Naive thymus-derived CD4-positive, alpha-beta T cell (primary cell): ENCODE measurements at regions of chr12 and their contacts with region 1.

Region 1: DNA sequence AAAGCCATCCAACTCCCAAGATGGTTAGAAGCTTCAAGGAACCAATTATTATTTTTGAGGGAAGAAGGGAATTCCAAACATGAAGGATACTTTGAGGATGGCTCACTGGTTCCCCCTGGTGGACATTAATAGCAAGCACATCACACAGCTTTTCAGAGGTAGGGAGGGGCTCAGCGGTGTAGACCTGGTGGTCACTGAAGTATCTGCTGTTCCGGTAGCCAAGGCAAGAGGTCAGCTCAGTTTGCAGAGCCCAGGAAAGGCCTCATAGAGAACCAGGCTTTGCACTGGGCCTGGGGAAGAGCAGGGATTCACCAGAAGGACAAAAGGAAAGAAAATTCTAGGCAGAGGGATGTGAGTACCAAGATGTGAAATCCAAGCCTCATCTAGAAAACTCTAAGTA is 118.7 kb downstream of the KSR2 start:
- DNase-seq: no peak
- ATAC-seq: peak; percentile 42
- H3K4me3 ChIP-seq: no peak overlapping the region
- H3K4me3 Mint-ChIP-seq: no peak overlapping the region
- H3K27ac ChIP-seq: no peak overlapping the region
- H3K27ac Mint-ChIP-seq: no peak overlapping the region
- H3K4me1 ChIP-seq: no peaks in the 10 kb centered on the region
- H3K4me1 Mint-ChIP-seq: peaks cover 0 to 4% (median 0%) of the 10 kb centered on the region in 7 donors
- H3K27me3 ChIP-seq: no peaks in the 10 kb centered on the region
- H3K27me3 Mint-ChIP-seq: peaks cover 3 to 40% (median 32%) of the 10 kb centered on the region in 5 donors

Region 2: DNA sequence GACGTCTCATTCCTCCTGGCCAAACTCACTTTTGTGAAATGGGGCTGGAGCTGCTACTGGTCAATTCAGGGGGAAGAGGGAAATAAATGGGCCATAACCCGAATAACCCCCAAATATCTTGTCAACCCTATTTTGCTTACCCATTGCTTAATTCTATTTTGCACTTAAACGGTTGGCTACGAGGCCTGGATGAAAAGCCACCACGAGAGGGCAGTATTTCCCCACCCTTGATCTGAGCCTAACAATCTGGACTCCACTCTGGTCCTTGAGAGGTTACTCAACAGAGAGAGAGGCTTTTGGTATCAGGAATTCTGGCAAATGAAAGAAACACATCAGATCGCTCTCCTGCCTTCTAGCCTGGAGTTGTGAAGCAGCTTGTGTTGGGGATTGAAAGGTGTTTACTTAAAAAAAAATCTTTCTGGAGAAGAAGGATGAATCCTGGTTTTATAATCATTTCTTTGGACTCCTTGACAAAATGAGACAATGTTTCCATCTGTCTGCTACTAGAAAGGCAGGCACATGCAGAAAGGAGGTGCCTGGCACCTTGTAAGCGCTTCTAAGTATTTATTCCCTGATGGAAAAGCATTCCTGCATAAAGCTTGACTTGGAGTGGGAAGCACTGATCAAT is 637.4 kb before region 1 on chr12:
- CTCF ChIA-PET with region 1: no interaction called
- POLR2A ChIA-PET with region 1: no interaction called
- intact Hi-C with region 1: loop called in 1 of 2 experiments (anchors 5 kb)
- DNase-seq: peak; percentile 18 to 58 (median 45)
- ATAC-seq: peak; percentile 72
- H3K4me3 ChIP-seq: no peak overlapping the region
- H3K4me3 Mint-ChIP-seq: no peak overlapping the region
- H3K27ac ChIP-seq: no peak overlapping the region
- H3K27ac Mint-ChIP-seq: no peak overlapping the region
- H3K4me1 ChIP-seq: no peaks in the 10 kb centered on the region
- H3K4me1 Mint-ChIP-seq: peaks cover 0 to 4% (median 0%) of the 10 kb centered on the region in 7 donors
- H3K27me3 ChIP-seq: no peaks in the 10 kb centered on the region
- H3K27me3 Mint-ChIP-seq: peaks cover 10 to 21% (median 16%) of the 10 kb centered on the region in 5 donors

Region 3: DNA sequence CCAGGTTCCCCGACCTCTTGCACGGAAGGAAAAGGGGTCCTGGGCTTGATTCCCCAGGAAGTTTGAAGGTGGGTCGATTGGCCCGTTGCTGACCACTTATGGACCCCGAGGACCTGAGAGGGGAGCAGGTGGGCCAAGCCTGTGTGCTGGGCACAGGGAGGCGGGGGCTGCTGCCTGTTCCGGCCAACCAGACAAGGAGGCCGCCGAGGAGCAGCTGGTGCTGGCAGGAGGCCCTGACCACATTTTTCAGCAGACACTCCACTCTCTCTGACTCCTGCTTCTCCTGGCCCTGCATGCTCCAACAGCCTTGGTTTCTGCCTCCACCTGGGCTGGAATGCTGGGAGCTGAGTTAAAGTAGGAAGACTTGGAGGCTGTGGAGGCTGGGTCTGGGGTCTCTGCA is 531.5 kb before region 1 on chr12:
- CTCF ChIA-PET with region 1: no interaction called
- POLR2A ChIA-PET with region 1: no interaction called
- intact Hi-C with region 1: no loop called
- DNase-seq: no peak
- ATAC-seq: no peak
- H3K4me3 ChIP-seq: no peak overlapping the region
- H3K4me3 Mint-ChIP-seq: no peak overlapping the region
- H3K27ac ChIP-seq: no peak overlapping the region
- H3K27ac Mint-ChIP-seq: no peak overlapping the region
- H3K4me1 ChIP-seq: no peaks in the 10 kb centered on the region
- H3K4me1 Mint-ChIP-seq: no peaks in the 10 kb centered on the region
- H3K27me3 ChIP-seq: no peaks in the 10 kb centered on the region
- H3K27me3 Mint-ChIP-seq: peaks cover 0 to 20% (median 4%) of the 10 kb centered on the region in 5 donors

Region 4: GRCh38 chr12:117622087-117622486 is 228.0 kb before region 1 on chr12:
- CTCF ChIA-PET with region 1: no interaction called
- POLR2A ChIA-PET with region 1: no interaction called
- intact Hi-C with region 1: no loop called
- DNase-seq: no peak
- ATAC-seq: no peak
- H3K4me3 ChIP-seq: no peak overlapping the region
- H3K4me3 Mint-ChIP-seq: no peak overlapping the region
- H3K27ac ChIP-seq: no peak overlapping the region
- H3K27ac Mint-ChIP-seq: no peak overlapping the region
- H3K4me1 ChIP-seq: no peaks in the 10 kb centered on the region
- H3K4me1 Mint-ChIP-seq: no peaks in the 10 kb centered on the region
- H3K27me3 ChIP-seq: no peaks in the 10 kb centered on the region
- H3K27me3 Mint-ChIP-seq: peaks cover 0 to 3% (median 0%) of the 10 kb centered on the region in 5 donors